GM12878 (cell line): ENCODE measurements at regions of chr1 and their contacts with region 1.

Region 1: DNA sequence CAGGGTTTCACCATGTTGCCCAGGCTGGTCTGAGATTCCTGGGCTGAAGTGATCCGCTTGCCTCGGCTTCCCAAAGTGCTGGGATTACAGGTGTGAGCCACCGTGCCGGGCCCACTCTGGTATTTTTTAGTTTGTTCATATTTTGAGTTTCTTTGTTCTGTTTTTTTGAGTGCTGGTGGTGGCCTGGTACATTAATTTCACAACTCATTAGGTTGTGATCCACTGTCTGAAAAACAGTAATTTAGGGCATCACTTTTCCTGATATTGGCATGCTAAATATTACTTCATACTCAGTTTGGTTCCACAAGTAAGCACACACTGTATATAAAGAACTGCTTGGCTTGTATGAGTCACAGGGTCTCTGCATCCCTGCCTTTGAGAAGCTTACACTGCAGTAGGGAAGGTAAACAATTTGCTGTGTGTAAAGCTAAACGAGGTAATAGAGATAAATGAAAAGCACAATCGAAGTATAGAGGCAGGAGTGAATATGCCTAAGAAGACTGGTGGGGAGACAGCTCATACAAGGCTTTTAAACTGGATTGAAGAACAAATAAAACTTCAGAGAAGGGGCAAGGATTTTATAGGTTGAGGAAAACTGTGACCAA is 7.7 kb downstream of the SNX27 start:
- DNase-seq: no peak
- ATAC-seq: peak; percentile 54
- H3K4me3 ChIP-seq: no peak overlapping the region
- H3K27ac ChIP-seq: peak overlapping the region; percentile 15; the same call in 1 of the 2 replicates
- H3K4me1 ChIP-seq: peaks cover 19% of the 10 kb centered on the region
- H3K27me3 ChIP-seq: no peaks in the 10 kb centered on the region
- CTCF ChIP-seq: no peak
- EP300 ChIP-seq: no peak
- POLR2A ChIP-seq: no peak
- RAD21 ChIP-seq: no peak

Region 2: DNA sequence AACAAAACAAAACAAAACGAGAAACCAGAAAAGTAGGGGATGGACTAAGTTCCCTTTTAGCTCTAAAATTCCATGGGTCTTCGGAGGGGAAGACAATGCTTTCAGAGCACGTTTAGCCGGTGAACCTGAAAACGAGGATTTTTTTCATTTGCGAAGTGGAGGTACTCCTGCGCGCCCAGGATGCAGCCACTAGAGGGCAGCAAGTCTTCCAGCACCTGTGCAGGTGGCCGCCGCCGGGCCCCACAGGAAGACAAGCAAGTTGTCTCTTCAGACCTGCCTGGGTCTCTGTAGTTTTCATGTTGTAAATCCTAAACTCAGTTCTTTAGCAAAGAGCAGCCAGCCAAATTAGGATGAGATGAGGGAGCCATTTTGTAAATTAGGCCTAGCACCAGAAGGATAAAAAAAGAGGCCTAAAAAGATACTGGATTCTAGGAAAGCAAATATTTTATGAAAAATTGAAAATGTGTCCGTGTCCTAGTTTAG is 25.4 kb before region 1 on chr1:
- CTCF ChIA-PET with region 1: interaction called, 15 read pairs
- POLR2A ChIA-PET with region 1: no interaction called
- RAD21 ChIA-PET with region 1: no interaction called
- SMC1A ChIA-PET with region 1: interaction called, 3 read pairs
- in situ Hi-C with region 1: no loop called
- intact Hi-C with region 1: no loop called
- DNase-seq: no peak
- ATAC-seq: peak; percentile 99
- H3K4me3 ChIP-seq: no peak overlapping the region
- H3K27ac ChIP-seq: no peak overlapping the region
- H3K4me1 ChIP-seq: no peaks in the 10 kb centered on the region
- H3K27me3 ChIP-seq: no peaks in the 10 kb centered on the region; a peak in 1 of 4 replicates
- CTCF ChIP-seq: peak; percentile 95 to 97 (median 95)
- EP300 ChIP-seq: no peak
- POLR2A ChIP-seq: no peak
- RAD21 ChIP-seq: peak; percentile 81

Region 3: GRCh38 chr1:151720974-151721787 is 101.6 kb after region 1 on chr1 and contains the start of gene RIIAD1:
- CTCF ChIA-PET with region 1: no interaction called
- POLR2A ChIA-PET with region 1: no interaction called
- RAD21 ChIA-PET with region 1: interaction called, 3 read pairs
- SMC1A ChIA-PET with region 1: no interaction called
- in situ Hi-C with region 1: no loop called
- intact Hi-C with region 1: loop called (anchors 5 kb)
- DNase-seq: no peak
- ATAC-seq: peak; percentile 92
- H3K4me3 ChIP-seq: peak within 1 kb of the TSS; percentile 76
- H3K27ac ChIP-seq: peak within 1 kb of the TSS; percentile 68
- H3K4me1 ChIP-seq: peaks cover 16% of the 10 kb centered on the region
- H3K27me3 ChIP-seq: peaks cover 3 to 6% of the 10 kb centered on the region in 2 experiments
- CTCF ChIP-seq: no peak
- EP300 ChIP-seq: no peak
- POLR2A ChIP-seq: no peak
- RAD21 ChIP-seq: no peak
- polyA plus RNA-seq, gene RIIAD1: not detected